Left lung (tissue), 14 donors: ENCODE measurements at regions of chr3 and their contacts with region 1.

Region 1: GRCh38 chr3:45938864-45939263 is 4.4 kb upstream of the CXCR6 start:
- DNase-seq: peak in 3 of 4 donors; percentile 82 to 92 (median 84)
- ATAC-seq: peak; percentile 95
- H3K4me3 ChIP-seq: no peak overlapping the region
- H3K27ac ChIP-seq: no peak overlapping the region
- H3K4me1 ChIP-seq: peaks cover 0 to 18% of the 10 kb centered on the region in 2 donors
- H3K27me3 ChIP-seq: no peaks in the 10 kb centered on the region
- CTCF ChIP-seq: peak; percentile 81 to 88

Region 2: DNA sequence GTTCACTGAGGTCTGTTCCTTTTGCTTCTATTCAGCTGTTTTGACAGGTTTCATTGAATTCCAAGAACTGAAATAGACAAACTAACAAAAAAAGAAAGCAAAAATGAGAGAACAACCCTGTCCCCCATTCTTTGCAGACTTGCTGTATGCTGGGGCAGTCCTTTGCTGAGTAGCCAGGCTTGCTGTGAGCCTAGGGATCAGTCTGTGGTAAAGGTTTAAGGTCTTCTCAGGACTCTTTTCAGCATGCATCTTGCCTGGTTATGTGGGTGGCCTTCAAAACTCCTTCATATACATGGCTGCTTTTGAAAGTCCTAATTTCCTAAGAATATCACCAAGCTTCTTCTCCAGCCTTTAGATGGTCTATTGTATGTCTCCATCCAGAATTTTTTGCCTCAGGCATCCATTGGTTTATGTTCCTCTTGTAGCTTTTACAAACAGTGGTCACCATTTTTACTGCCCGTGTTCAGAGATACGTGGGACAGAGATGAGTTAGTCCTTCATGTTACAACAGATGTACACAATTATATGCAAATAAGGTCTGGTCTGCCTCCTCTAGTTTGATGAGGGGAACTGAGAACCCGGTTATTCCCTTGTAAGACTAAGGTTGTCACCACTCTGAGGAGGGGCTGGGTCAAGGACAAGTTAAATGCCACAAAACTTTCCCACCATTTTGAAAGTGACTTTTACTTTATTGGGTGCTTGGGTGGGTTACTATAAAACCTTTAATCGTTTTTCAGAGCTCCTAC is 208.3 kb before region 1 on chr3:
- intact Hi-C with region 1: no loop called
- DNase-seq: no peak
- ATAC-seq: no peak
- H3K4me3 ChIP-seq: no peak overlapping the region
- H3K27ac ChIP-seq: no peak overlapping the region
- H3K4me1 ChIP-seq: peaks cover 0 to 3% of the 10 kb centered on the region in 2 donors
- H3K27me3 ChIP-seq: no peaks in the 10 kb centered on the region
- CTCF ChIP-seq: no peak

Region 3: GRCh38 chr3:46078712-46079400 is 140.0 kb after region 1 on chr3:
- intact Hi-C with region 1: loop called in 1 of 2 experiments (anchors 2 kb)
- DNase-seq: peak in 3 of 4 donors; percentile 87 to 94 (median 87)
- ATAC-seq: peak; percentile 99
- H3K4me3 ChIP-seq: no peak overlapping the region
- H3K27ac ChIP-seq: peak overlapping the region in 1 of 2 donors; percentile 13
- H3K4me1 ChIP-seq: peaks cover 5 to 31% of the 10 kb centered on the region in 2 donors
- H3K27me3 ChIP-seq: no peaks in the 10 kb centered on the region
- CTCF ChIP-seq: peak; percentile 94 to 95

Region 4: GRCh38 chr3:46114324-46114989 is 175.6 kb after region 1 on chr3:
- intact Hi-C with region 1: no loop called
- DNase-seq: no peak
- ATAC-seq: peak; percentile 46
- H3K4me3 ChIP-seq: no peak overlapping the region
- H3K27ac ChIP-seq: peak overlapping the region in 1 of 2 donors; percentile 81
- H3K4me1 ChIP-seq: peaks cover 5 to 57% of the 10 kb centered on the region in 2 donors
- H3K27me3 ChIP-seq: no peaks in the 10 kb centered on the region
- CTCF ChIP-seq: no peak

Region 5: DNA sequence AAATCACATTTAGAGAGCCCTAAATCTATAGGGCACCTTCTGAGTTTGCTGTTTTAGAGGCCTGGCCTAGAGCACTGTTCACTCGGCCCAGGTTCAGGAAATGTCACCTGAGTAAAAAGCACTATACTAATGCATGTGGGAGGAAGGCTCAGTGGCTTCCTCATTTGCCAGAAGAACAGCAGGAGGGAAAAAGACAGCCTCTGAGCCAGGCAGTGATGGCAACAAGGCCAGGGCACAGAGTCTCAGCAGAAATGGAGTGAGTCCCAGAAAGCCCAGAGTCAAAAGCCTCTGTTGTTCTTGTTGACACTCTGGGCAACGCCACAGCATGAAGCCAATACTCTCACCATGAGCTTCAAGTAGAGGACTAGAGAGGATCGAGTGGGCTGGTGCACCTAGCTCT is 500.0 kb after region 1 on chr3:
- intact Hi-C with region 1: loop called in 1 of 2 experiments (anchors 10 kb)
- DNase-seq: no peak
- ATAC-seq: no peak
- H3K4me3 ChIP-seq: no peak overlapping the region
- H3K27ac ChIP-seq: peak overlapping the region in 1 of 2 donors; percentile 46
- H3K4me1 ChIP-seq: no peaks in the 10 kb centered on the region
- H3K27me3 ChIP-seq: no peaks in the 10 kb centered on the region
- CTCF ChIP-seq: no peak